ENCODE measurements at regions of chr1 and their contacts with region 1.

Region 1: GRCh38 chr1:53220171-53220961 is at the start of gene CZIB:
- DNase-seq: peak; percentile 84 to 96
- H3K4me3 ChIP-seq: peak within 1 kb of the TSS; percentile 79
- H3K27ac ChIP-seq: peak within 1 kb of the TSS; percentile 70
- H3K4me1 ChIP-seq: peaks cover 16% of the 10 kb centered on the region
- H3K27me3 ChIP-seq: no peaks in the 10 kb centered on the region
- CTCF ChIP-seq: no peak
- total RNA-seq, gene CZIB: 50.3 and 51.1 TPM in 2 replicates

Region 2: GRCh38 chr1:53073868-53074311 is 146.5 kb before region 1 on chr1:
- CTCF ChIA-PET with region 1: no interaction called
- POLR2A ChIA-PET with region 1: no interaction called
- intact Hi-C with region 1: no loop called
- DNase-seq: no peak
- H3K4me3 ChIP-seq: no peak overlapping the region
- H3K27ac ChIP-seq: no peak overlapping the region
- H3K4me1 ChIP-seq: no peaks in the 10 kb centered on the region
- H3K27me3 ChIP-seq: no peaks in the 10 kb centered on the region
- CTCF ChIP-seq: no peak

Region 3: GRCh38 chr1:53196485-53197270 is 23.7 kb before region 1 on chr1 and contains the start of gene CPT2:
- CTCF ChIA-PET with region 1: no interaction called
- POLR2A ChIA-PET with region 1: no interaction called
- intact Hi-C with region 1: loop called (anchors 1 kb)
- DNase-seq: peak; percentile 77 to 92
- H3K4me3 ChIP-seq: peak within 1 kb of the TSS; percentile 74
- H3K27ac ChIP-seq: peak within 1 kb of the TSS; percentile 64
- H3K4me1 ChIP-seq: peaks cover 29% of the 10 kb centered on the region
- H3K27me3 ChIP-seq: no peaks in the 10 kb centered on the region
- CTCF ChIP-seq: 0 out of 2 replicates have a peak, but pooled peaks have one; percentile 16
- total RNA-seq, gene CPT2: 32.2 and 35.7 TPM in 2 replicates

Region 4: GRCh38 chr1:53238197-53239155 is 18.1 kb after region 1 on chr1 and contains the start of gene MAGOH:
- CTCF ChIA-PET with region 1: no interaction called
- POLR2A ChIA-PET with region 1: interaction called, 17 read pairs
- intact Hi-C with region 1: loop called (anchors 2 kb)
- DNase-seq: peak; percentile 92 to 94
- H3K4me3 ChIP-seq: peak within 1 kb of the TSS; percentile 76
- H3K27ac ChIP-seq: peak within 1 kb of the TSS; percentile 71
- H3K4me1 ChIP-seq: peaks cover 27% of the 10 kb centered on the region
- H3K27me3 ChIP-seq: no peaks in the 10 kb centered on the region
- CTCF ChIP-seq: no peak
- total RNA-seq, gene MAGOH: 48.0 and 75.7 TPM in 2 replicates

Measured in PC-9 (cell line).